Mammary epithelial cell (primary cell): ENCODE measurements at regions of chr1 and their contacts with region 1.

Region 1: DNA sequence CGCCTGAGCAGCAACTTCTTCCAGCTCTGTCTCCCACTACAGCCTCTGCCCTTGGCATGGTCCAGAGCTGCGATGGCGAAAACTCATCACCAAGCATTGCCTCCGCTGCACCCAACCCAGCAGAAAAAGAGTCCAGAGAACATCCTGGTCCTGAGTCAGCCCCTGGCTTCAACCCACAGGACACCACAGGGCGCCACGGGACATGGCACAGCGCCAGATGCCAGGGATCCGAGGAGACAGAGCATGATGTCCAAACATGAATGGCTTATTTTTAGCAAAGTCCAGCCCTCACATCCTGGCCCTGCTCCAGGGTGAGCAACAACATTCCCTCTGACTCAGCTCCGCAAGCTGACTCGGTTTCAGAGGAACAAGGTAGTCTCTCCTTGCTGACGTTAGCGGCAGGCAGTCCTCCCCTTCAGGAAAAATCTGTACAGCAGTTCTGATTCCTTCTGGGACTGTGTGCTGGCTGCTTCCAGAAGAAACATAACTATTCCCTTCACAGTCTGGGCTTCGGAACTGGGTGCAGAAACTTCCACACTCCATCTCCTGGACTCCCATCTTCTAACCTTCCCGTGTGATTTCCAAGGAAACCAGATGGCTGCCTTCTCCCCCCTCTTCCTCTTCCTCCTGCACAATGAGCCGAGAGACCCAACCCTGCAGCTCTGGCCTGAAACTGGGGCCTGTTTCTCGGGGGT is 131.3 kb downstream of the TOMM20 start:
- DNase-seq: peak; percentile 100
- H3K4me3 ChIP-seq: peak overlapping the region in 1 of 3 experiments; percentile 8
- H3K27ac ChIP-seq: peak overlapping the region; percentile 98
- H3K4me1 ChIP-seq: peaks cover 27% of the 10 kb centered on the region
- H3K27me3 ChIP-seq: no peaks in the 10 kb centered on the region
- CTCF ChIP-seq: peak in 1 of 2 donors; percentile 7

Region 2: GRCh38 chr1:234647245-234647644 is 350.1 kb before region 1 on chr1:
- CTCF ChIA-PET with region 1: no interaction called
- dilution Hi-C with region 1: no loop called
- in situ Hi-C with region 1: no loop called
- intact Hi-C with region 1: loop called (anchors 1 kb)
- DNase-seq: no peak
- H3K4me3 ChIP-seq: no peak overlapping the region
- H3K27ac ChIP-seq: peak overlapping the region; percentile 65
- H3K4me1 ChIP-seq: peaks cover 33% of the 10 kb centered on the region
- H3K27me3 ChIP-seq: no peaks in the 10 kb centered on the region
- CTCF ChIP-seq: no peak

Region 3: DNA sequence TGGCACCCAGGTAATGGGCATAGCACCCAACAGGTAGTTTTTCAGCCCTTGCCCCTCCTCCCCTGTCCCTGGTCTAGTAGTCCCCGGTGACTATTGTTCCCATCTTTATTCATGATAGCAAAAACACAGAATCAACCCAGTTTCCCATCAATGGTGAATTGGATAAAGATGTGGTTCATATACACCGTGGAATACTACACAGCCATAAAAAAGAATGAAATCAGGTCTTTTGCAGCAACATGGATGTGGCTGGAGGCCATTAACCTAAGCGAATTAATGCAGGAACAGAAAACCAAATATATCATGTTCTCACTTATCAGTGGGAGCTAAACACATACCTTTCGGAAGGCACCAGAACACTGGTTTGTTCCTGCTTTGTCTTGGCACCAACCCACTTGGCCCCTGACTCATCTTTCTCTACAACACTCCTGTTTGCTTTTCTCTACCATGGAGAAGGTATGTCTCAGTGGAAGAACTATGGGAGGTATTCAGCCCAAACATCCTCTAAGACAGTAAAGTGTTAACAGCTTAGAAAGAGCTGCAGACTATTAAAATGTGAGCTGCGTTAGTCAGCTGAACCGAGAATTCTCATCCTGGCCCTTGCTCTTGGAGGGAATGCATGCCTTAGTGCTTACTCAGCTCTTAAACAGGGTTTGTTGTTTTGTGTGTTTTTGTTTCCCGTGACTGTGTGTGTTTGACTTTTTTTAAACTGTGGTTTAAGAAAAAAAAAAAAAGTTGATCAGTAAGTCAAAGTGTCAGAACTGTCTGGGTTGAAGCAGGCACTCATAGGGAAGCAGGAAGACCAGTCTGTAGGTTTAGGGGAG is 71.7 kb before region 1 on chr1:
- CTCF ChIA-PET with region 1: no interaction called
- dilution Hi-C with region 1: no loop called
- in situ Hi-C with region 1: no loop called
- intact Hi-C with region 1: loop called (anchors 2 kb)
- DNase-seq: peak; percentile 99
- H3K4me3 ChIP-seq: no peak overlapping the region
- H3K27ac ChIP-seq: peak overlapping the region; percentile 60
- H3K4me1 ChIP-seq: peaks cover 16% of the 10 kb centered on the region
- H3K27me3 ChIP-seq: no peaks in the 10 kb centered on the region
- CTCF ChIP-seq: no peak

Region 4: DNA sequence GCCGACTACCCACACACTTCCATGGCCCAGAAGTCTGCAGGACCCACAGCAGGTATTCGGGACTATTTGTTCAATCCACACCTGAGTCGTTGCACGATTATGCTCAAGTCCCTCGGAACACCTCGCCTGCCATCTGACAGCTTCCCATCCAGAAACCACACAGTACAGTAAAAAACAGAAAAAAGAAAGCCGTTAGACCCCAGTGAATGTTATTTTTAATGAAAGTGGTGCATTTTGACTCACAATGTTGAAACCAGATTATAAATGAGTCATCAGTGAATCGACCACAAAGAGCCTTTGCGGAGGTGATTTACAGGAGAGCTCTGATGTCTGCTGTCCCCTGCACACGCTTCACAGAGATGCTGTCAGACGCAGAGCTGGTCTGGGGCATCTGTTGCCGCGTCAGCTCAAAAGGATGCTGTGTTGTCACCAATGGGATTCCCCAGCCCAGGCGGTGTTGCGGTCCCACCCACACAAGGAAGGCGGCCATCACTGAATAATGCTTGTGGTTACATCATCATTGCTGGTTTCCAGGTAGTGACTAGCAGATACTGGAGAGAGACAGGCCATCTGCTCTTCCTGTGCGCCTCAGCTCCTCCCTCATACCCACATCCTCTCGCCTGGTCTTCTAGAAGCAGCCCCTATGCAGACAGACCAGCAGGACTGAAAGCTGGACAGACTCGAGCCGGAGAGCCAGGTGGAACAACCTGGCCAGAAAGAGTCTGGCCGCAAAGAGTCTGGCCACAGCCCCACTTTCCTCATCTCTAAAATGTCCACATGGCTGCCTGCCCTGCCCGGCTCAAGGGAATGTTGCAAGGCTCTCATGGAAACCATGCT is 14.5 kb after region 1 on chr1:
- CTCF ChIA-PET with region 1: no interaction called
- dilution Hi-C with region 1: no loop called
- in situ Hi-C with region 1: no loop called
- intact Hi-C with region 1: loop called (anchors 1 kb)
- DNase-seq: peak; percentile 100
- H3K4me3 ChIP-seq: no peak overlapping the region
- H3K27ac ChIP-seq: peak overlapping the region; percentile 97
- H3K4me1 ChIP-seq: peaks cover 20% of the 10 kb centered on the region
- H3K27me3 ChIP-seq: no peaks in the 10 kb centered on the region
- CTCF ChIP-seq: no peak